CD8-positive, alpha-beta memory T cell (primary cell): ENCODE measurements at regions of chr2 and their contacts with region 1.

Region 1: DNA sequence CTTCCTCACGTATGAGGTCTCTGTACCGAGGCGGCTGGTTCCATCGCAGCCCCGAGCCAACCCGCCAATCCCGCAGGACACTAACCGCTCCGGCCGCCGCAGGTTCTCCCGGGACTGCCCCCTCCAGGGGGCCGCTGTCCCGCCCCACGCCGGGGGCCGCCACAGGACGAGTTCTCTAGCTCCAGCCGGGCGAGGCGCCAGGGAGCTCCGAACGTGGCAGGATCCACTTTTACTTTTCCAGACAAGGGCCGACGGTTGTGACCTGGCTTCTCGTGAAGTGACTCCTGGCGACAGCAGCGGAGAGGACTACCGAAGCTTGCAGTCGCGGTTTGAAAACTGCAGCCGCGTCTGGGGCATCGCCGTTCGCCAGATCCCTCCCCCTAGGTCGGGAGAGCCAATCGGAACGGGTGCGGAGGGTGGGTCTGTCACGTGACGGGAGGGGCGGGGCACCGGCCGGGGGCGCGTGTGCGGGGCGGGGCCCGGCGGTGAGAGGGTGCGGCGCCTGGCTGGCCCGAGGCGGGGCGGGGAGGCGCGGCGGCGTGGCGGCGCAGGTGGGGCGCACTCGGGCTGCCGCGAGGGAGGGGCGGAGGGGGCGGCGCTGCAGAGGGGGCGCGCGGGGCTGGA is at the start of gene STK17B:
- DNase-seq: peak; percentile 93 to 98 (median 95)
- H3K4me3 ChIP-seq: peak within 1 kb of the TSS; percentile 88
- H3K4me3 Mint-ChIP-seq: peak within 1 kb of the TSS; percentile 95 to 99 (median 97)
- H3K27ac ChIP-seq: peak within 1 kb of the TSS; percentile 98
- H3K27ac Mint-ChIP-seq: peak within 1 kb of the TSS; percentile 97 to 100 (median 98)
- H3K4me1 ChIP-seq: peaks cover 43% of the 10 kb centered on the region
- H3K4me1 Mint-ChIP-seq: peaks cover 43 to 56% (median 51%) of the 10 kb centered on the region in 3 donors
- H3K27me3 ChIP-seq: no peaks in the 10 kb centered on the region
- H3K27me3 Mint-ChIP-seq: peaks cover 0 to 2% of the 10 kb centered on the region in 2 donors
- total RNA-seq, gene STK17B: 121 to 130 TPM

Region 2: DNA sequence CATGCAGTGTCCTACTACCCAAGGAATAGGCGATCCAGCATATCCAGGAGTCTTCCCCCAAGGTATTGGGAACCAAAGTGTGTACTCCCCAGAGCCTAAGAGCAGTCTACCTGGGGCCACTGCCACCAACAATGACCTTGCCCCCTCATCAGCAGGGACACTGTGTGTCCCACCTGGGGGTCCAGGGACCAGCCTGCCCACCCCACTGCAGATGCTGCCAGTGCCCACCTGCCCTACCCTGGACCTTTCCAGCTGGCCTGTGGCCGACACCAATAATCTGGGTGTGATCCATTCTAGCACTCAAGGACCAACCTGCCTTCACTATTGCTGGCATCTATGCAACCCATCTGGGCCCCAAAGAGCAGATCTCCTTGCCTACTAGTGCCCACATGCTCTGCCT is 134.9 kb before region 1 on chr2:
- CTCF ChIA-PET with region 1: no interaction called
- POLR2A ChIA-PET with region 1: no interaction called
- DNase-seq: no peak
- H3K4me3 ChIP-seq: no peak overlapping the region
- H3K4me3 Mint-ChIP-seq: no peak overlapping the region
- H3K27ac ChIP-seq: no peak overlapping the region
- H3K27ac Mint-ChIP-seq: no peak overlapping the region
- H3K4me1 ChIP-seq: no peaks in the 10 kb centered on the region
- H3K4me1 Mint-ChIP-seq: no peaks in the 10 kb centered on the region
- H3K27me3 ChIP-seq: no peaks in the 10 kb centered on the region
- H3K27me3 Mint-ChIP-seq: peaks cover 25 to 65% of the 10 kb centered on the region in 2 donors

Region 3: GRCh38 chr2:196076778-196077568 is 94.4 kb before region 1 on chr2:
- CTCF ChIA-PET with region 1: interaction called, 15 read pairs
- POLR2A ChIA-PET with region 1: interaction called, 5 read pairs
- DNase-seq: no peak
- H3K4me3 ChIP-seq: no peak overlapping the region
- H3K4me3 Mint-ChIP-seq: no peak overlapping the region
- H3K27ac ChIP-seq: no peak overlapping the region
- H3K27ac Mint-ChIP-seq: peak overlapping the region in 1 of 8 donors; percentile 34
- H3K4me1 ChIP-seq: peaks cover 11% of the 10 kb centered on the region
- H3K4me1 Mint-ChIP-seq: peaks cover 4 to 40% (median 20%) of the 10 kb centered on the region in 3 donors
- H3K27me3 ChIP-seq: no peaks in the 10 kb centered on the region
- H3K27me3 Mint-ChIP-seq: no peaks in the 10 kb centered on the region

Region 4: GRCh38 chr2:196160101-196160500 is 11.3 kb before region 1 on chr2:
- CTCF ChIA-PET with region 1: interaction called, 56 read pairs
- POLR2A ChIA-PET with region 1: interaction called, 48 read pairs
- DNase-seq: peak; percentile 36 to 90 (median 80)
- H3K4me3 ChIP-seq: peak overlapping the region; percentile 9
- H3K4me3 Mint-ChIP-seq: peak overlapping the region; percentile 72 to 96 (median 85)
- H3K27ac ChIP-seq: peak overlapping the region; percentile 45
- H3K27ac Mint-ChIP-seq: peak overlapping the region; percentile 71 to 99 (median 98)
- H3K4me1 ChIP-seq: peaks cover 88% of the 10 kb centered on the region
- H3K4me1 Mint-ChIP-seq: peaks cover 78 to 97% (median 93%) of the 10 kb centered on the region in 3 donors
- H3K27me3 ChIP-seq: no peaks in the 10 kb centered on the region
- H3K27me3 Mint-ChIP-seq: peaks cover 0 to 4% of the 10 kb centered on the region in 2 donors

Region 5: GRCh38 chr2:196200557-196200956 is 29.2 kb after region 1 on chr2:
- CTCF ChIA-PET with region 1: interaction called, 10 read pairs
- POLR2A ChIA-PET with region 1: interaction called, 11 read pairs
- DNase-seq: peak in 1 of 5 donors; percentile 49
- H3K4me3 ChIP-seq: peak overlapping the region; percentile 53
- H3K4me3 Mint-ChIP-seq: peak overlapping the region; percentile 68 to 88 (median 79)
- H3K27ac ChIP-seq: peak overlapping the region; percentile 40
- H3K27ac Mint-ChIP-seq: peak overlapping the region; percentile 78 to 98 (median 94)
- H3K4me1 ChIP-seq: peaks cover 25% of the 10 kb centered on the region
- H3K4me1 Mint-ChIP-seq: peaks cover 36 to 61% (median 56%) of the 10 kb centered on the region in 3 donors
- H3K27me3 ChIP-seq: no peaks in the 10 kb centered on the region
- H3K27me3 Mint-ChIP-seq: peaks cover 0 to 2% of the 10 kb centered on the region in 2 donors

Region 6: DNA sequence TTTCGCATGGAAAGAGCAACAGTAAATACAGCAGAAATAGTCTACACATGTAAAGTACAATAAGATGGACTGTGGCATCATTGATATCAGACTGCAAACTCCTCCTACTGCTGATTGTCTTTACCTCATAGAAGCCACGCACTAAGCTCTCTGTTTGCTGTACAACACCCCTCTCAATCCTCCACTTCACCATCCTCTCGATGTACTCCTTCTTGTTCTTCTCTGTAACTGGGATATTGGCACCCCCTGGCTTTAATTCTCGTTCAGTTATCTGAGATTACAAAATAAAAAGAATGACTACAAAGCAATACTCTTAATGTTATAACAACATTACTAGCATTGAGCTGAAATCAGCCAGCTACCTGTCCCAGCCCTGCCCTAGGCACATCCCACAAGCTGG is 49.3 kb after region 1 on chr2:
- CTCF ChIA-PET with region 1: interaction called, 25 read pairs
- POLR2A ChIA-PET with region 1: interaction called, 6 read pairs
- DNase-seq: peak in 1 of 5 donors; percentile 61
- H3K4me3 ChIP-seq: no peak overlapping the region
- H3K4me3 Mint-ChIP-seq: peak overlapping the region in 5 of 7 donors; percentile 10 to 39 (median 16)
- H3K27ac ChIP-seq: no peak overlapping the region
- H3K27ac Mint-ChIP-seq: peak overlapping the region in 7 of 8 donors; percentile 9 to 71 (median 45)
- H3K4me1 ChIP-seq: peaks cover 39% of the 10 kb centered on the region
- H3K4me1 Mint-ChIP-seq: peaks cover 42 to 76% (median 70%) of the 10 kb centered on the region in 3 donors
- H3K27me3 ChIP-seq: no peaks in the 10 kb centered on the region
- H3K27me3 Mint-ChIP-seq: no peaks in the 10 kb centered on the region

Region 7: DNA sequence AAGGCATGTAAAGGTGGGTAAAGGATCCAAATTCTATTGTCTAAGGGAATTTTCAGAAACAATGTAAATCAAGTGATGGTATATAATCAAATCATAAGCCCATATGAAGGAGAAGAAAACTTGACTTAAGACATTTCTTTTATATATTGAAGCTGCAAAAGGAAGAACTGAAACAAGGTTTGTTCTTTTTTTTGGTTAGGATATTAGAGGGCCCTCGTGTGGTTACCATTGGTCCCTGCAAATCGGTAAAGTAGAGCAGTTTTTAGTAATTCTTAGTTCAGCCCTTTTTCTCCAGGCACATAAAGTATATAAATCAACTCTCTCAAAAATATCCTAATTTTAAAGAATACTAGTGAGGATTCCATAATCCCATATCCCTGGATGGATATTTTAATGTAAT is 105.6 kb after region 1 on chr2:
- CTCF ChIA-PET with region 1: interaction called, 20 read pairs
- POLR2A ChIA-PET with region 1: interaction called, 13 read pairs
- DNase-seq: peak in 3 of 5 donors; percentile 51 to 63 (median 52)
- H3K4me3 ChIP-seq: no peak overlapping the region
- H3K4me3 Mint-ChIP-seq: peak overlapping the region in 5 of 7 donors; percentile 6 to 70 (median 36)
- H3K27ac ChIP-seq: no peak overlapping the region
- H3K27ac Mint-ChIP-seq: peak overlapping the region in 6 of 8 donors; percentile 11 to 84 (median 40)
- H3K4me1 ChIP-seq: peaks cover 34% of the 10 kb centered on the region
- H3K4me1 Mint-ChIP-seq: peaks cover 34 to 39% (median 37%) of the 10 kb centered on the region in 3 donors
- H3K27me3 ChIP-seq: no peaks in the 10 kb centered on the region
- H3K27me3 Mint-ChIP-seq: peaks cover 3 to 5% of the 10 kb centered on the region in 2 donors